ENCODE measurements at regions of chr6 and their contacts with region 1.

Region 1: GRCh38 chr6:2765166-2765895 is at the start of gene WRNIP1:
- DNase-seq: peak; percentile 98
- H3K4me3 Mint-ChIP-seq: peak within 1 kb of the TSS; percentile 80
- H3K27ac Mint-ChIP-seq: peak within 1 kb of the TSS; percentile 98
- H3K4me1 Mint-ChIP-seq: peaks cover 49% of the 10 kb centered on the region
- H3K27me3 Mint-ChIP-seq: no peaks in the 10 kb centered on the region

Region 2: GRCh38 chr6:2658788-2659187 is 106.5 kb before region 1 on chr6:
- CTCF ChIA-PET with region 1: no interaction called
- DNase-seq: no peak
- H3K4me3 Mint-ChIP-seq: no peak overlapping the region
- H3K27ac Mint-ChIP-seq: no peak overlapping the region
- H3K4me1 Mint-ChIP-seq: no peaks in the 10 kb centered on the region
- H3K27me3 Mint-ChIP-seq: peaks cover 6% of the 10 kb centered on the region

Region 3: GRCh38 chr6:2738373-2738979 is 26.9 kb before region 1 on chr6:
- CTCF ChIA-PET with region 1: interaction called, 27 read pairs
- DNase-seq: peak; percentile 74
- H3K4me3 Mint-ChIP-seq: no peak overlapping the region
- H3K27ac Mint-ChIP-seq: no peak overlapping the region
- H3K4me1 Mint-ChIP-seq: no peaks in the 10 kb centered on the region
- H3K27me3 Mint-ChIP-seq: peaks cover 8% of the 10 kb centered on the region

Region 4: GRCh38 chr6:2749969-2750600 is 15.2 kb before region 1 on chr6:
- CTCF ChIA-PET with region 1: interaction called, 14 read pairs
- DNase-seq: peak; percentile 77
- H3K4me3 Mint-ChIP-seq: no peak overlapping the region
- H3K27ac Mint-ChIP-seq: no peak overlapping the region
- H3K4me1 Mint-ChIP-seq: no peaks in the 10 kb centered on the region
- H3K27me3 Mint-ChIP-seq: peaks cover 58% of the 10 kb centered on the region

Region 5: DNA sequence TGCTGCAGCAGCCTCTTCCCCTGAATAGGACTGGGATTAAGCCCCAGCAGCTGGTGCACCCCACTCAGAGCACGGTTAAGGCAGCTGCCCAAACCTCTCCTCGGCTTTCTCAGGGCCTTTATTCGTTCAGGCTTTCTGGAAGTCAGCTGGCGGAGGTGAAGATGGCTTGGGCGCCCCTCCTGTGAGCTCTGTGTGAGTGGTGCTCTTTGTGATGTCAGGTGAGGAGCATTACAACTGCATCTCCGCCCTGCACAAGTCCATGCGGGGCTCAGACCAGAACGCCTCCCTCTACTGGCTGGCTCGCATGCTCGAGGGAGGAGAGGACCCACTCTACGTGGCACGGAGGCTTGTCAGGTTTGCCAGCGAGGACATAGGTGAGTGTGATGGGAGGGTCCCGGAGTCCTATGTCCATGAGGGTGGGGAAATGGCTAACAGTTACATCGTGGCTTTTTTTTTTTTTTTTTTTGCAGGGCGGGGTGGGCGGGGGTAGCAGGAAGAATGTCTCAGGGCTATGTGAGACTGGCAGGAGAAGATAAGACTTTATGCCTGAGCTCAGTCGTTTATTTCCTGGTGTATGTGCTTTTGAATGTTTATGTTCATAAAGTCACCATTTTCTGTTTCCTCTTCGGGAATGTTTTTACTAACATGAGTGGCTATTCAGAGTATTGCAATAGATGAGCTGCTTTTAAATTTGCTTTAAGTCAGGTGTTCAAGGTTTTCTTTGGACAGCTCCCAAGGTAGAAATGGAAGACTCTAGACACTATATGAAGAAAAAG is 18.0 kb after region 1 on chr6:
- CTCF ChIA-PET with region 1: interaction called, 20 read pairs
- DNase-seq: no peak
- H3K4me3 Mint-ChIP-seq: no peak overlapping the region
- H3K27ac Mint-ChIP-seq: no peak overlapping the region
- H3K4me1 Mint-ChIP-seq: peaks cover 8% of the 10 kb centered on the region
- H3K27me3 Mint-ChIP-seq: no peaks in the 10 kb centered on the region

Region 6: GRCh38 chr6:2959909-2960719 is 194.8 kb after region 1 on chr6:
- CTCF ChIA-PET with region 1: no interaction called
- DNase-seq: no peak
- H3K4me3 Mint-ChIP-seq: no peak overlapping the region
- H3K27ac Mint-ChIP-seq: no peak overlapping the region
- H3K4me1 Mint-ChIP-seq: peaks cover 13% of the 10 kb centered on the region
- H3K27me3 Mint-ChIP-seq: peaks cover 28% of the 10 kb centered on the region